ENCODE measurements at regions of chr20 and their contacts with region 1.

Region 1: GRCh38 chr20:49982346-49983122 is at the start of gene SNAI1:
- DNase-seq: peak; percentile 67 to 86 (median 84)
- ATAC-seq: peak; percentile 97
- H3K4me3 ChIP-seq: peak within 1 kb of the TSS; percentile 57
- H3K4me3 Mint-ChIP-seq: peak within 1 kb of the TSS; percentile 67 to 85 (median 76)
- H3K27ac ChIP-seq: peak within 1 kb of the TSS; percentile 72
- H3K27ac Mint-ChIP-seq: peak within 1 kb of the TSS; percentile 2 to 88 (median 68)
- H3K4me1 ChIP-seq: peaks cover 11 to 18% of the 10 kb centered on the region in 2 donors
- H3K4me1 Mint-ChIP-seq: peaks cover 12 to 31% (median 25%) of the 10 kb centered on the region in 7 donors
- H3K27me3 ChIP-seq: no peaks in the 10 kb centered on the region
- H3K27me3 Mint-ChIP-seq: peaks cover 0 to 37% (median 0%) of the 10 kb centered on the region in 5 donors
- total RNA-seq, gene SNAI1: 0.22 to 7.0 (median 0.34) TPM

Region 2: DNA sequence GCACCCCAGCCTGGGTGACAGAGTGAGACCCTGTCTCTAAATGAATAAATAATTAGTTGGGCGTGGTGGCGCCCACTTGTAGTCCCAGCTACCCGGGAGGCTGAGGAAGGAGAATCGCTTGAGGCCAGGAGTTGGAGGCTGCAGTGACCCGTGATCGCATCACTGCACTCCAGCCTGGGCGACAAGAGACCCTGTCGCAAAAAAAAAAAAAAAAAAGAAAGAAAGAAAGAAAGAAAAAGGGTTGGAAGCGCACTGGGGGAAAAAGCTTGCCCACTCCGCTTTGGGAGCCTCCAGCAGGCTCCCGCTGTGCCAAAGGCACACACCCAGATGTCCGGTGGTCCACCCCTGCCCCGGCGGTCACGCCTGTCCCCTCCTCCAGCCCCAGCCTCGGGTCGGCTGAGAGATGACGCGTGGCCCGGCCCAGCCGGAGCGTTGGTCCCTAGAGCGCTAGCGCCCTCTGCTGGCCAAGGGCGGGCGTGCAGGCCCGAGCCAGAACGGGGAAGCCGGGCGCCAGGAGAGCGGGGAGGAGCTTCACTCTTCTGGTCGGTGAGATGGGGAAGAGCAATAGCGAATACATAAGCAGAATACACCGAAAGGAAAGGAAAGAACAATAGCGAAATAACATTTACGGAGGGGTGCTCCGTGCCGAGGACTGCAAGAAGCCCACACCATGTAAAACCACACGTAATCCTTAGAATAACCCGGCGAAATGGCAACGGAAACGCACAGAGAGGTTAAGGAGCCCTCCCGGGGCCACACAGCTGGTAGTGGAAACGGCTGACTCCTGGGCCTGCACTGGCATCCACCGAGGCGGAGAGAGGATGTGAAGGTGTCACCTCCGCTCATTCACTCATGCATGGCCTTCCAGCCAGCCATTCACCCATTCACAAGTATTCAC is 88.7 kb after region 1 on chr20:
- CTCF ChIA-PET with region 1: interaction called, 61 read pairs
- POLR2A ChIA-PET with region 1: interaction called, 21 read pairs
- intact Hi-C with region 1: loop called (anchors 1 kb)
- DNase-seq: peak; percentile 75 to 99 (median 88)
- ATAC-seq: peak; percentile 100
- H3K4me3 ChIP-seq: peak overlapping the region; percentile 51
- H3K4me3 Mint-ChIP-seq: peak overlapping the region; percentile 59 to 87 (median 72)
- H3K27ac ChIP-seq: no peak overlapping the region
- H3K27ac Mint-ChIP-seq: peak overlapping the region in 1 of 9 donors; percentile 18
- H3K4me1 ChIP-seq: peaks cover 0 to 4% of the 10 kb centered on the region in 2 donors
- H3K4me1 Mint-ChIP-seq: peaks cover 0 to 5% (median 5%) of the 10 kb centered on the region in 7 donors
- H3K27me3 ChIP-seq: no peaks in the 10 kb centered on the region
- H3K27me3 Mint-ChIP-seq: peaks cover 0 to 5% (median 4%) of the 10 kb centered on the region in 5 donors

Region 3: GRCh38 chr20:50085452-50086365 is 103.2 kb after region 1 on chr20:
- CTCF ChIA-PET with region 1: interaction called, 45 read pairs
- POLR2A ChIA-PET with region 1: interaction called, 11 read pairs
- intact Hi-C with region 1: loop called (anchors 1 to 5 kb)
- DNase-seq: peak in 7 of 9 donors; percentile 29 to 63 (median 50)
- ATAC-seq: peak; percentile 87
- H3K4me3 ChIP-seq: peak overlapping the region; percentile 63
- H3K4me3 Mint-ChIP-seq: peak overlapping the region; percentile 75 to 91 (median 86)
- H3K27ac ChIP-seq: peak overlapping the region; percentile 43
- H3K27ac Mint-ChIP-seq: peak overlapping the region; percentile 64 to 93 (median 85)
- H3K4me1 ChIP-seq: peaks cover 9 to 13% of the 10 kb centered on the region in 2 donors
- H3K4me1 Mint-ChIP-seq: peaks cover 20 to 43% (median 32%) of the 10 kb centered on the region in 7 donors
- H3K27me3 ChIP-seq: no peaks in the 10 kb centered on the region
- H3K27me3 Mint-ChIP-seq: no peaks in the 10 kb centered on the region

Region 4: DNA sequence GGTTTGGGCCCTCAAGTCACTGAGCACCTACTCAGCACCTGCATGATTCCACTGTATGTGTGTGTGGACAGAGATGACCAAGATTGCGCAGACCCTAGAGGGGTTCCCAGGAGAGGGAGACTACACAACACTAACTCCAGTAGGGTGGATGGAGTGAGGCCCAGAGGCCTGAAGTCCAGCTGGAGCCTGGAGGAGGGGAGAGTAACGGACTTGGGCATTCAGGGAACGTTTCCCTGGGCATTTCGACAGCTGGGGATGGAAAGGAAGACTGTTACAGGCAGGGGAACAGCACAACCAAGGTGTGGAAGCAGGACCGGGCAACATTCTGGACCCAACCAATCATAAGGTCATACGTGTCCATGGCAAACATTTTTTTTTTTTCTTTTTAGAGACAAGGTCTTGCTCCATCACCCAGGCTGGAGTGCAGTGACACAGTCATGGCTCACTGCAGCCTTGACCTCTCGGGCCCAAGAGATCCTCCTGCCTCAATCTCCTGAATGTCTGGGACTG is 197.0 kb after region 1 on chr20:
- CTCF ChIA-PET with region 1: interaction called, 6 read pairs
- POLR2A ChIA-PET with region 1: interaction called, 3 read pairs
- intact Hi-C with region 1: loop called in 1 of 2 experiments (anchors 1 kb)
- DNase-seq: no peak
- ATAC-seq: no peak
- H3K4me3 ChIP-seq: no peak overlapping the region
- H3K4me3 Mint-ChIP-seq: no peak overlapping the region
- H3K27ac ChIP-seq: no peak overlapping the region
- H3K27ac Mint-ChIP-seq: no peak overlapping the region
- H3K4me1 ChIP-seq: no peaks in the 10 kb centered on the region
- H3K4me1 Mint-ChIP-seq: peaks cover 0 to 6% (median 0%) of the 10 kb centered on the region in 7 donors
- H3K27me3 ChIP-seq: no peaks in the 10 kb centered on the region
- H3K27me3 Mint-ChIP-seq: peaks cover 3 to 15% (median 8%) of the 10 kb centered on the region in 5 donors

Region 5: GRCh38 chr20:50460460-50461267 is 478.1 kb after region 1 on chr20:
- CTCF ChIA-PET with region 1: no interaction called
- POLR2A ChIA-PET with region 1: no interaction called
- intact Hi-C with region 1: loop called (anchors 5 kb)
- DNase-seq: peak; percentile 54 to 87 (median 74)
- ATAC-seq: peak; percentile 95
- H3K4me3 ChIP-seq: no peak overlapping the region
- H3K4me3 Mint-ChIP-seq: no peak overlapping the region
- H3K27ac ChIP-seq: no peak overlapping the region
- H3K27ac Mint-ChIP-seq: peak overlapping the region in 1 of 9 donors; percentile 65
- H3K4me1 ChIP-seq: no peaks in the 10 kb centered on the region
- H3K4me1 Mint-ChIP-seq: peaks cover 0 to 18% (median 4%) of the 10 kb centered on the region in 7 donors
- H3K27me3 ChIP-seq: no peaks in the 10 kb centered on the region
- H3K27me3 Mint-ChIP-seq: peaks cover 5 to 14% (median 7%) of the 10 kb centered on the region in 5 donors

Measured in naive thymus-derived CD4-positive, alpha-beta T cell (primary cell).